Dorsolateral prefrontal cortex (tissue), 120 donors: ENCODE measurements at regions of chr19 and their contacts with region 1.

Region 1: DNA sequence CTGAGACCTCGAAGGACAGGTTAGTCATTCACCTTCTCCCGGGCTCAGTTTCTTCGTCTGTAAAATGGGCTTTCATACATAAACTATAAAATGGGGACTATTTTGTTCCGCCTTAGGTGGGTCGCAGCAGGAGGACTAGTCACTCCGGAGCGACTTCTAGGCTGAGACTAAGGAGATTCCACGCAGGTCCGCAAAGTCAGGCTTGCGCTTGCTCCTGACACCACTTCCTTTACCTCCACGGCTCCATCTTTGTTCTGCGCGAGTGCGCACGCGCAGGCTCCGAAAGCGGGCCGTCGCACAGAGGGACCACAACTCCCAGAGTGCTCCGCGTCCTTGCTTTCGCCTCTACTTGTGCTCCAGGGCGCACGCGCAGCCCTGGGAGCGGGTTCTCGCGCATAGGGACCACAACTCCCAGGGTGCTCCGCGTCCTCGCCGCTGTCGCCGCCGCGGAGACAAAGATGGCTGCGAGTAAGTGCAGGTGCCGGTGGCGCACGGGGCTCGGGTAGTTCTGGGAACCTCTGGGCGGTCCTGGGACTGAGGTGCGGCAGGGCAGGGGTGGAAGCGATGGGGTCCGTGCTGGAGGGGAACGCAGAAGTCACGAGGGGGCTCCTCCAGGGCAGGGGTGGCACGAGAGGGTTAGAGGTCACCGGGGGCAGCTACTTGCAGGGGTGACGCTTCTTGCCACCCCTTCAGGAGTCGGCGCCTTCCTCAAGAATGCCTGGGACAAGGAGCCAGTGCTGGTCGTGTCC is at the start of gene NDUFA3:
- DNase-seq: peak; percentile 97 to 98 (median 98)
- H3K4me3 ChIP-seq: peak within 1 kb of the TSS; percentile 68 to 100 (median 90)
- H3K27ac ChIP-seq: peak within 1 kb of the TSS in 54 of 59 donors; percentile 13 to 88 (median 76)
- H3K27me3 ChIP-seq: peaks cover 0 to 6% (median 0%) of the 10 kb centered on the region in 45 donors
- CTCF ChIP-seq: peak in 30 of 56 donors; percentile 10 to 57 (median 32)
- total RNA-seq, gene NDUFA3: 100 to 299 (median 166) TPM

Region 2: GRCh38 chr19:53906211-53907192 is 196.1 kb before region 1 on chr19:
- intact Hi-C with region 1: loop called in 1 of 2 experiments (anchors 10 kb)
- DNase-seq: peak; percentile 53 to 83 (median 70)
- H3K4me3 ChIP-seq: peak overlapping the region in 52 of 59 donors; percentile 1 to 94 (median 78)
- H3K27ac ChIP-seq: peak overlapping the region in 6 of 59 donors; percentile 70 to 89 (median 77)
- H3K27me3 ChIP-seq: peaks cover 0 to 27% (median 0%) of the 10 kb centered on the region in 45 donors
- CTCF ChIP-seq: peak; percentile 42 to 93 (median 84)

Region 3: DNA sequence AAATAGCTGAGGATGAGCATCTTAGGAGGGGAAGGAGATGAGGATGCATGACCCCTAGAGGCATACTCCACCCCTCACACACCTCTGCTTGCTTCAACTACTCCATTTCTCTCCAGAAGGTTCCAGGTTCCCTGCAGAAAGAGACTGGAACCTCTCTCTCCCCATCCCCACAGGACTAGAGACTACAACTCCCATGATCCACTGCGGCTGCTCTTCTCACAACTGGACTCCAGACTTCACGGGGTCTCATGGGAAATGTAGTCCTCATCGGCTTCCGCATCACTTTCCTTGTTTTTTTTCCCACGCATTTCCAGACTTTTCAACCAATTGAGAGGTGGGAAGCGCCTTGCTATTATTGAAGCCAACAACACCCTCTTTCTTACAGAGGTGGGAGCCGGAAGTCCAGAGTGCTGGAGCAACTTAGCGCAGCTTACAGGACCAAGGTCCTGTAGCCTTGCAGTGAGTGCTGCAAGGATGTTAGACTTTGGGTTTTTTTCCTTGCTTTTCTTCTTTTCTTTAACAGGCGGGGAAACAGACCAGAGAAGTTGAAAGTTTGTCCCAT is 125.1 kb before region 1 on chr19:
- intact Hi-C with region 1: loop called in 1 of 2 experiments (anchors 5 kb)
- DNase-seq: peak; percentile 56 to 93 (median 82)
- H3K4me3 ChIP-seq: peak overlapping the region; percentile 22 to 68 (median 53)
- H3K27ac ChIP-seq: peak overlapping the region in 36 of 59 donors; percentile 1 to 80 (median 54)
- H3K27me3 ChIP-seq: peaks cover 0 to 43% (median 6%) of the 10 kb centered on the region in 45 donors
- CTCF ChIP-seq: peak in 9 of 56 donors; percentile 9 to 35 (median 15)

Region 4: DNA sequence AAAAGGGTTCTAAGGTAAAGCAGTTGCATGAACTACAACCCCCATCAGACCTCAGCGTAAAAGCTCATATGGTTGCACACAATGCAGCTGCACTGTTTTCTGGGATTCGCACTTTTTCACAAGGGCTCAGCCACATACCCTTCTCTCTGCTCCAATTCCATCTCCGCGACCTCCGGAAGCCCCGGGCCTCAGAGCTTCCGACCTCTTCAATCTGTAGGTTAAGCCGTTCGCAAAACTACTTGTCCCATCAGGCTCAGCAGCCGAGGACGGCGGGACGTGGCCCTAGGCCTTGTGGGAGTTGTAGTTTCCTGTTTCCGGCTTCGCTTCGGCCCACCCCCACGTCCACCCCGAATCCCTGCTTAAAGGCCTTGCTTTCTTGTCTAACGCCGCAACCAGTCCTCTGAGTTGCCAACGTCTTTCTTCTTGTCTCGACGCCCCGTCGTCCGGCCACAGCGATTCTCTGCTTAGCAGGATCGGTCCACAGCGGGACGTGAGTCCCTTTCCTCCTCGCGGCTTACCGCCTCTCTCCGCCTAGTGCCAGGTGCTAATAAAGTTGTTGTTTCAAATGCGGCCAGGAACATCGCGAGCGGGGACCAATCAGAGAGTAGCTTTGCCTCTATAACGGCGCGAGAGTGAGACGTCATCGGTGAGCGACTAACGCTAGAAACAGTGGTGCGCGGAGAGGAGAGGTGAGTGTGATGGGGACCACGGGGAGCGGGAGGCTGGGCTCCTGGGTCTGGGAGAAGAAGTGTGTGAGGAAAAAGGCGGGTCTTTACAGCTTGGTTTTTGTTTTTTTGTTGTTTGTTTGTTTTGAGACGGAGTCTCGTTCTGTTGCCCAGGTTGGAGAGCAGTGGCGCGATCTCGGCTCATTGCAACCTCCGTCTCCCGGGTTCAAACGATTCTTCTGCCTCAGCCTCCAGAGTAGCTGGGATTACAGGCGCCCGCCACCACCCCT is 12.8 kb after region 1 on chr19 and contains the starts of genes PRPF31 and TFPT:
- intact Hi-C with region 1: loop called (anchors 1 kb)
- DNase-seq: peak; percentile 93 to 98 (median 95)
- H3K4me3 ChIP-seq: peak within 1 kb of the TSS; percentile 66 to 100 (median 93)
- H3K27ac ChIP-seq: peak within 1 kb of the TSS; percentile 69 to 99 (median 95)
- H3K27me3 ChIP-seq: no peaks in the 10 kb centered on the region
- CTCF ChIP-seq: peak in 19 of 56 donors; percentile 5 to 52 (median 18)
- total RNA-seq, gene PRPF31: 38.2 to 60.7 (median 48.1) TPM
- total RNA-seq, gene TFPT: 30.8 to 72.2 (median 49.8) TPM

Region 5: DNA sequence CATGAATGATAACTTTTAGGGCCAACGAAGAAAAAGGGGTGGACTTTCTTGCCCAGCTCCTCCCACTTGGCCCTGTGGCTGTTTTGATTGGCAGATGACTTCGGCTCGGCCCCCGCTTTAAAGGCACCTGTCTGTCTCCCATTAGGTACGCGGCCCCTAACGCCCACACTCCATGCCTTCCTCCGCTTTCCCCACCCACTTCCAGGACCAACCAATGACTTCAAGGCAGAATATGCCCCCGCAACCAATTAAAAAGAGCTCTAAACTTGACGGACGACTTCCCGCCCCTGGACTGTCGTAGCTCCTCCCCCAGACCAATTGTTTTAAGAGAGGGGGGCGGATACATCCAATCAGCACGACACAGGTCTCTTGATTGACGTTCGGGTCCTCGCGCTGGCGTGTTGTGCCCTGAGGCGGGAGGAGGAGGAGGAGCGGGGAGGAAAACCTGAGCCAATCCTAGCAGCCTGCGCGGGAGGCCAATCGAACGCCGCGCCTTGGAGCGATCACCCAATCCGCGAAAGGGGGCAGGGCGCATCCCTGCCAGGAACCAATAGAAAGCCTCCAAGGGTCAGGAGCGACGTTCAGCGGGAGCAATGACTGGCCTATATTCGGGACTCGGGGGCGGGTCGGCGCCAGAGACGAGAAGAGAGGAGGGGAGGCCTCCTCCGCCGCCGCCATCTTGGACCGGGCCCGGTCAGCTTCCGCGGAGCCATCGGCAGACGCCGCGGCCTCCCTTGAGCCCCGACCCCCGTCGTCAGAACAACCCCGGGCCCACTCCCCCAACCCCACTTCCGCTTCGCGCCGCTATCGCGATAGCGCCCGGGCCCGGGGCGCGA is 34.7 kb after region 1 on chr19 and contains the start of gene CNOT3:
- intact Hi-C with region 1: loop called in 1 of 2 experiments (anchors 1 kb)
- DNase-seq: peak; percentile 95 to 100 (median 99)
- H3K4me3 ChIP-seq: peak within 1 kb of the TSS; percentile 60 to 100 (median 97)
- H3K27ac ChIP-seq: peak within 1 kb of the TSS in 57 of 59 donors; percentile 70 to 97 (median 92)
- H3K27me3 ChIP-seq: no peaks in the 10 kb centered on the region
- CTCF ChIP-seq: peak in 2 of 56 donors; percentile 10 to 15
- total RNA-seq, gene CNOT3: 29.1 to 60.7 (median 39.7) TPM